IMR-90 (cell line): ENCODE measurements at regions of chr10 and their contacts with region 1.

Region 1: DNA sequence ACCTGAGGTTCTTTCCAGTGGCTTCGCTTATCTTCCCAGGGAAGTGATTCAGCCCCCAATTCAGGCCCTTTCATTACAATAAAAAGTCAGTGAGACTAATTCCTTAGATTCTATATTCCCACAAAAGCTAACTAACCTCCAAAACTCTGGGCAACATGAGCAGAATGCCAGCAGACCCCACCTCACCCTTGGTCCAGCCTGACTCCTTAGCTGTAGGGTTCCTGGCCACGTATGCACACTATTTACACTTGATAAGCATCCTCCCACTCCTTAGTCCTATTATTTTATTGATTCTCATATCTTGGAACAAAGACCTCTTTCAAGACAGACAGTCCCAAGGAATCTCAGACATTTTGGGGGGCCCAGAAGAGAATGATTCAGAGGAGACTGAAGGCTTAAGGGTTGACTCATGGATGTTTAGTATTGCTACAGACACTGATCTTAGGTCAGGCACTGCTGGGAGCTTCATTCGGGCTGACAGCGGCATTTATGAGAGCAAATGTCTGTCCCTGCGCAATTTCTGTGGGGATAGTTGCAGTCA is 162.6 kb upstream of the GDF10 start:
- DNase-seq: peak; percentile 96
- ATAC-seq: peak; percentile 86
- H3K4me3 ChIP-seq: peak overlapping the region; percentile 50
- H3K27ac ChIP-seq: peak overlapping the region; percentile 96
- H3K4me1 ChIP-seq: peaks cover 34% of the 10 kb centered on the region
- H3K27me3 ChIP-seq: no peaks in the 10 kb centered on the region
- CTCF ChIP-seq: no peak
- POLR2A ChIP-seq: peak; percentile 70
- RAD21 ChIP-seq: peak; percentile 2; the same call in 1 of the 2 replicates

Region 2: GRCh38 chr10:47116445-47116844 is 20.9 kb before region 1 on chr10:
- CTCF ChIA-PET with region 1: interaction called, 3 read pairs
- POLR2A ChIA-PET with region 1: no interaction called
- dilution Hi-C with region 1: no loop called
- in situ Hi-C with region 1: no loop called
- intact Hi-C with region 1: loop called (anchors 1 kb)
- DNase-seq: peak; percentile 67
- ATAC-seq: peak; percentile 85
- H3K4me3 ChIP-seq: no peak overlapping the region
- H3K27ac ChIP-seq: peak overlapping the region; percentile 77; the same call in 1 of the 2 replicates
- H3K4me1 ChIP-seq: peaks cover 16% of the 10 kb centered on the region
- H3K27me3 ChIP-seq: peaks cover 2% of the 10 kb centered on the region; the same call in 1 of the 2 replicates
- CTCF ChIP-seq: no peak
- POLR2A ChIP-seq: no peak
- RAD21 ChIP-seq: 0 out of 2 replicates have a peak, but pooled peaks have one; percentile 4

Region 3: GRCh38 chr10:47165711-47166524 is 28.5 kb after region 1 on chr10:
- CTCF ChIA-PET with region 1: interaction called, 3 read pairs
- POLR2A ChIA-PET with region 1: no interaction called
- dilution Hi-C with region 1: no loop called
- in situ Hi-C with region 1: no loop called
- intact Hi-C with region 1: loop called (anchors 2 kb)
- DNase-seq: peak; percentile 80
- ATAC-seq: peak; percentile 73
- H3K4me3 ChIP-seq: no peak overlapping the region
- H3K27ac ChIP-seq: peak overlapping the region; percentile 97
- H3K4me1 ChIP-seq: peaks cover 30% of the 10 kb centered on the region
- H3K27me3 ChIP-seq: no peaks in the 10 kb centered on the region
- CTCF ChIP-seq: no peak
- POLR2A ChIP-seq: 0 out of 2 replicates have a peak, but pooled peaks have one; percentile 33
- RAD21 ChIP-seq: peak; percentile 19; the same call in 1 of the 2 replicates